ENCODE measurements at regions of chrX and their contacts with region 1.

Region 1: GRCh38 chrX:2707334-2707760 is 16.3 kb downstream of the CD99 start:
- DNase-seq: peak; percentile 13 to 80 (median 64)
- ATAC-seq: peak; percentile 50
- H3K4me3 ChIP-seq: peak overlapping the region in 1 of 2 experiments; percentile 16
- H3K4me3 Mint-ChIP-seq: peak overlapping the region; percentile 52
- H3K27ac ChIP-seq: peak overlapping the region in 1 of 2 experiments; percentile 31
- H3K27ac Mint-ChIP-seq: peak overlapping the region; percentile 84
- H3K4me1 ChIP-seq: peaks cover 76% of the 10 kb centered on the region
- H3K4me1 Mint-ChIP-seq: peaks cover 86% of the 10 kb centered on the region
- H3K27me3 ChIP-seq: no peaks in the 10 kb centered on the region
- H3K27me3 Mint-ChIP-seq: no peaks in the 10 kb centered on the region
- CTCF ChIP-seq: no peak

Region 2: DNA sequence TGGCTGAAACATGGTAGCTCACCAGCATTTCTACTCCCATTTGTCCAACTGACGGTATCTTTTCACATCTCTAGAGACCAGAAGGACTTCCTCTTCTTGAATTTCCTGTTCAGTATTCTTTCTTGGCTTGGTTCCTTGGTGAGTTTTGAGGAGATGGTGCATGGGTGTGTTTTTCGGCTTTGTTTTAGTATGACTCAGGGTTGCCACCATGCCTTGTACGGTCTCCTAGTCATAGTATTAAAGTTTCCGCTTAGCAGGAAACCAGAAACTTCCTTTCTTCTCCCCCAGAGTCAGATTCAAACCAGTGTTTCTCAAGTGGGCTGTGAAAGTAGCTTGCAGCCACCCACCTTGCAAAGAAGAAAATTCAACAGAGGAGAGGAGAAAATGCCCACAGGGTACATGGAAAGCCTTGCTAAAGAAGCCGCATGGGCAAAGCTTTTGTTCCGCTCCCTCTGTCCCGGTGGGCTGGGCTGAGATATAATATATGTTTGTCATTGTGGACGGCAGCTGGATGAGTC is 10.6 kb before region 1 on chrX:
- CTCF ChIA-PET with region 1: no interaction called
- POLR2A ChIA-PET with region 1: no interaction called
- intact Hi-C with region 1: loop called (anchors 1 to 2 kb)
- DNase-seq: peak in 8 of 9 experiments; percentile 30 to 90 (median 58)
- ATAC-seq: peak; percentile 81
- H3K4me3 ChIP-seq: peak overlapping the region; percentile 19 to 23
- H3K4me3 Mint-ChIP-seq: peak overlapping the region; percentile 66
- H3K27ac ChIP-seq: peak overlapping the region in 1 of 2 experiments; percentile 71
- H3K27ac Mint-ChIP-seq: peak overlapping the region; percentile 79
- H3K4me1 ChIP-seq: peaks cover 84% of the 10 kb centered on the region
- H3K4me1 Mint-ChIP-seq: peaks cover 93% of the 10 kb centered on the region
- H3K27me3 ChIP-seq: no peaks in the 10 kb centered on the region
- H3K27me3 Mint-ChIP-seq: peaks cover 2% of the 10 kb centered on the region
- CTCF ChIP-seq: no peak